HepG2 (cell line): ENCODE measurements at regions of chr11 and their contacts with region 1.

Region 1: GRCh38 chr11:107565219-107565937 is at the start of gene ALKBH8:
- DNase-seq: peak; percentile 54
- ATAC-seq: peak; percentile 97
- H3K4me3 ChIP-seq: peak within 1 kb of the TSS; percentile 81 to 96 (median 84)
- H3K27ac ChIP-seq: peak within 1 kb of the TSS; percentile 67
- H3K4me1 ChIP-seq: peaks cover 19% of the 10 kb centered on the region
- H3K27me3 ChIP-seq: peaks cover 0 to 4% of the 10 kb centered on the region in 2 experiments; a peak in 1 of 5 replicates
- CTCF ChIP-seq: no peak
- EP300 ChIP-seq: peak in 1 of 2 experiments; percentile 10; a peak in 1 of 4 replicates
- POLR2A ChIP-seq: peak; percentile 67 to 71; a peak in 3 of 4 replicates
- RAD21 ChIP-seq: no peak
- total RNA-seq, gene ALKBH8: 9.1 and 15.3 TPM in 2 replicates

Region 2: GRCh38 chr11:107598225-107599139 is 33.1 kb after region 1 on chr11:
- CTCF ChIA-PET with region 1: no interaction called
- POLR2A ChIA-PET with region 1: no interaction called
- in situ Hi-C with region 1: no loop called
- intact Hi-C with region 1: loop called (anchors 5 kb)
- DNase-seq: no peak
- ATAC-seq: peak; percentile 98
- H3K4me3 ChIP-seq: no peak overlapping the region
- H3K27ac ChIP-seq: no peak overlapping the region
- H3K4me1 ChIP-seq: no peaks in the 10 kb centered on the region
- H3K27me3 ChIP-seq: peaks cover 0 to 6% of the 10 kb centered on the region in 2 experiments; a peak in 1 of 5 replicates
- CTCF ChIP-seq: peak; percentile 49
- EP300 ChIP-seq: no peak
- POLR2A ChIP-seq: no peak
- RAD21 ChIP-seq: no peak

Region 3: GRCh38 chr11:107689317-107690202 is 124.2 kb after region 1 on chr11:
- CTCF ChIA-PET with region 1: interaction called, 19 read pairs
- POLR2A ChIA-PET with region 1: no interaction called
- in situ Hi-C with region 1: loop called (anchors 5 kb)
- intact Hi-C with region 1: loop called (anchors 1 kb)
- DNase-seq: peak; percentile 57
- ATAC-seq: peak; percentile 98
- H3K4me3 ChIP-seq: no peak overlapping the region
- H3K27ac ChIP-seq: no peak overlapping the region
- H3K4me1 ChIP-seq: no peaks in the 10 kb centered on the region
- H3K27me3 ChIP-seq: no peaks in the 10 kb centered on the region
- CTCF ChIP-seq: peak; percentile 83
- EP300 ChIP-seq: no peak
- POLR2A ChIP-seq: no peak
- RAD21 ChIP-seq: peak; percentile 75

Region 4: DNA sequence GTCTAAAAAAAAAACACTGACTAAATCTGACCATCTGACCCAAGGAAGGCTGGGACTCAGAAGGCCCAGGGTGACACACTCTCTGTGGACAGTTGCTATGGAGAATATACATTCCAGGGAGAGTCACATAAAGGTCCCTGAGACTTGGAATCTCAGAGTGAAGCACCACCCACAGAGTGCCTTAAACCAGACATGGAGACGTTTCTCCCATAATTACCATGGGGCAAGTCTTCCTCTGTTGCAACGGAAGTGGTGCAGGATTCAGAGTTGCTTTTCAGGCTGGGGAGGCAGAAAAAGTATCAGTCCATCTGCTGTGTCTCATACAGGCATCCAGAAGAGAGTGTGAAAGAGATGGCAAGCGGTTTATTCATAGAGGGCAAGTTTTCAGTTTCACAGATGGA is 205.2 kb after region 1 on chr11:
- CTCF ChIA-PET with region 1: no interaction called
- POLR2A ChIA-PET with region 1: no interaction called
- in situ Hi-C with region 1: no loop called
- intact Hi-C with region 1: loop called (anchors 5 kb)
- DNase-seq: no peak
- ATAC-seq: no peak
- H3K4me3 ChIP-seq: no peak overlapping the region
- H3K27ac ChIP-seq: no peak overlapping the region
- H3K4me1 ChIP-seq: no peaks in the 10 kb centered on the region
- H3K27me3 ChIP-seq: no peaks in the 10 kb centered on the region
- CTCF ChIP-seq: no peak
- EP300 ChIP-seq: no peak
- POLR2A ChIP-seq: no peak
- RAD21 ChIP-seq: no peak

Region 5: GRCh38 chr11:107876141-107876540 is 310.8 kb after region 1 on chr11:
- CTCF ChIA-PET with region 1: no interaction called
- POLR2A ChIA-PET with region 1: no interaction called
- in situ Hi-C with region 1: no loop called
- intact Hi-C with region 1: no loop called
- DNase-seq: no peak
- ATAC-seq: no peak
- H3K4me3 ChIP-seq: no peak overlapping the region
- H3K27ac ChIP-seq: no peak overlapping the region
- H3K4me1 ChIP-seq: no peaks in the 10 kb centered on the region
- H3K27me3 ChIP-seq: no peaks in the 10 kb centered on the region
- CTCF ChIP-seq: no peak
- EP300 ChIP-seq: no peak
- POLR2A ChIP-seq: no peak
- RAD21 ChIP-seq: no peak

Region 6: GRCh38 chr11:107898270-107898669 is 332.9 kb after region 1 on chr11:
- CTCF ChIA-PET with region 1: no interaction called
- POLR2A ChIA-PET with region 1: no interaction called
- in situ Hi-C with region 1: no loop called
- intact Hi-C with region 1: loop called (anchors 2 kb)
- DNase-seq: peak; percentile 20
- ATAC-seq: peak; percentile 80
- H3K4me3 ChIP-seq: no peak overlapping the region
- H3K27ac ChIP-seq: no peak overlapping the region
- H3K4me1 ChIP-seq: no peaks in the 10 kb centered on the region
- H3K27me3 ChIP-seq: peaks cover 0 to 8% of the 10 kb centered on the region in 2 experiments; a peak in 1 of 5 replicates
- CTCF ChIP-seq: peak; percentile 44
- EP300 ChIP-seq: no peak
- POLR2A ChIP-seq: no peak
- RAD21 ChIP-seq: no peak